Psoas muscle (tissue), 8 donors: ENCODE measurements at regions of chr3 and their contacts with region 1.

Region 1: GRCh38 chr3:122942937-122943827 is 84.4 kb downstream of the SEMA5B start:
- DNase-seq: peak; percentile 61 to 72
- ATAC-seq: peak; percentile 85 to 93 (median 90)
- H3K4me3 ChIP-seq: no peak overlapping the region
- H3K27ac ChIP-seq: no peak overlapping the region
- H3K4me1 ChIP-seq: no peaks in the 10 kb centered on the region
- H3K27me3 ChIP-seq: no peaks in the 10 kb centered on the region
- CTCF ChIP-seq: peak; percentile 85

Region 2: DNA sequence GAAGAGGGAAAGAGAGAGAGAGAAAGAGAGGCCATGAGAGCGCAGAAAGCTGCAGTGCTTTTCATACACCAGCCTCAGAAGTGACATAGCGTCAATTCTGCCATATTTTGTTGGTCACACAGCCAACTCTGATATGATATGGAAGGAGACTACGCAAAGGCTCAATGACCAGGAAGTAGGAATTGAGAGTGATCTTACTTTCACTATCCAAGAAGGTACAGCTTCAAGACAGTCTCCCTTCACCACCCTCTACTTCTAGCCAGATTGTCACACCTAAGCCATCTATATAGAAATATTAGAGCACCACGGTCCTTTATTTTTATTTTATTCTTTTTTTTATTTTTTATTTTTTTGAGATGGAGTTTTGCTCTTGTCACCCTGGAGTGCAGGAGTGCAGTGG is 344.6 kb before region 1 on chr3:
- intact Hi-C with region 1: no loop called
- DNase-seq: no peak
- ATAC-seq: no peak
- H3K4me3 ChIP-seq: no peak overlapping the region
- H3K27ac ChIP-seq: no peak overlapping the region
- H3K4me1 ChIP-seq: peaks cover 9% of the 10 kb centered on the region
- H3K27me3 ChIP-seq: no peaks in the 10 kb centered on the region
- CTCF ChIP-seq: no peak

Region 3: GRCh38 chr3:122810734-122811133 is 132.4 kb before region 1 on chr3:
- intact Hi-C with region 1: no loop called
- DNase-seq: no peak
- ATAC-seq: no peak
- H3K4me3 ChIP-seq: no peak overlapping the region
- H3K27ac ChIP-seq: no peak overlapping the region
- H3K4me1 ChIP-seq: no peaks in the 10 kb centered on the region
- H3K27me3 ChIP-seq: no peaks in the 10 kb centered on the region
- CTCF ChIP-seq: no peak

Region 4: DNA sequence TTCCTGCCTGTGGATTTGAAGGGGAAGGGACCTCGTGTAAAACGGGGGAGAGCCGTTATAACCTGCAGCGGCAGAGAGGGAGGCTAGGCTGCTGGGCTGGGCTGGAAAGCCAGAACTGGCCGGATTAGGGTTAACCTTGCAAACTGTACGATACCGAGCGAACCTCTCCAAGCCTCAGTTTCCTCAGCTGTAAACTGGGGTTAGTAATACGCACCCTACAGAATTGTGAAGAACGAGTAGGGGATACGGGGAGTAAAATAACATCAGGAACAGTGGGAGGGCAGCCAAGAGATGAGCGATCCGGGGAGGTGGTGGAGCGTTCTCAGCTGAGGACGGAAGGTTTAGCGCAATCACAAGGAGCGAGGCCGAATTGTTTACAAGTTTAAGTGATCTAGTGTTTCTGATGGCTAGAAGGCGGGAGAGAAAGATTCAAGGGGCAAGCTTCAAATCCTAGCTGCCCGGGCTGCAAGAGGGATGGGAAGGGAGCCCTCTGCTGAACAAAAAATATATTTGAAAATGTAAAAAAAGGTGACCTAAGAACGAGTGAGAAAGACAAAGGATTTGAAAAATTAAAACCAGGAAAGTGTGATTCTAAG is 85.1 kb after region 1 on chr3:
- intact Hi-C with region 1: loop called in 1 of 2 experiments (anchors 2 kb)
- DNase-seq: peak in 1 of 2 donors; percentile 17
- ATAC-seq: peak; percentile 28 to 67 (median 46)
- H3K4me3 ChIP-seq: peak overlapping the region; percentile 74
- H3K27ac ChIP-seq: no peak overlapping the region
- H3K4me1 ChIP-seq: peaks cover 10% of the 10 kb centered on the region
- H3K27me3 ChIP-seq: peaks cover 0 to 83% (median 18%) of the 10 kb centered on the region in 3 donors
- CTCF ChIP-seq: peak; percentile 49

Region 5: GRCh38 chr3:123258811-123259420 is 315.7 kb after region 1 on chr3:
- intact Hi-C with region 1: loop called (anchors 2 to 10 kb)
- DNase-seq: no peak
- ATAC-seq: peak in 2 of 4 donors; percentile 53 to 76
- H3K4me3 ChIP-seq: no peak overlapping the region
- H3K27ac ChIP-seq: no peak overlapping the region
- H3K4me1 ChIP-seq: no peaks in the 10 kb centered on the region
- H3K27me3 ChIP-seq: no peaks in the 10 kb centered on the region
- CTCF ChIP-seq: peak; percentile 62

Region 6: DNA sequence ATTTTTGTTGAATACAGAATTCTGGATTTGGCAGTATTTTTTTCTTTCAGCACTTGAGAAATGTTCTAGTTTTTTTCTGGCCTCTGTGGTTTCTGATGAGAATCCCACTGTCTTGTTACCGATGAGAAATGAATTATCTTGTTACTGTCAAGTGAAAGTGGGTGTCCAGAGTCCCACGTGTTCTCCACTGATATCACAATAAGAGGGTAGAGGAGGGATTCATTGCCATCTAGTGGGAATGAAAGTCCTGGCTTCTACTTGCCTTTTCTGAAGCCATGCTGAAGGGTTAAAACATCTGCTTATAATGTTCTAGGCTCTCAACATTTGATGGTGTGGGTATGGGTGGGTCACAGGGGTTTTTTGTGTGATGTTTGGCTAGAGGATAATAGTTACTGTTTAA is 324.6 kb after region 1 on chr3:
- intact Hi-C with region 1: loop called in 1 of 2 experiments (anchors 10 kb)
- DNase-seq: no peak
- ATAC-seq: no peak
- H3K4me3 ChIP-seq: no peak overlapping the region
- H3K27ac ChIP-seq: no peak overlapping the region
- H3K4me1 ChIP-seq: peaks cover 4% of the 10 kb centered on the region
- H3K27me3 ChIP-seq: no peaks in the 10 kb centered on the region
- CTCF ChIP-seq: no peak

Region 7: DNA sequence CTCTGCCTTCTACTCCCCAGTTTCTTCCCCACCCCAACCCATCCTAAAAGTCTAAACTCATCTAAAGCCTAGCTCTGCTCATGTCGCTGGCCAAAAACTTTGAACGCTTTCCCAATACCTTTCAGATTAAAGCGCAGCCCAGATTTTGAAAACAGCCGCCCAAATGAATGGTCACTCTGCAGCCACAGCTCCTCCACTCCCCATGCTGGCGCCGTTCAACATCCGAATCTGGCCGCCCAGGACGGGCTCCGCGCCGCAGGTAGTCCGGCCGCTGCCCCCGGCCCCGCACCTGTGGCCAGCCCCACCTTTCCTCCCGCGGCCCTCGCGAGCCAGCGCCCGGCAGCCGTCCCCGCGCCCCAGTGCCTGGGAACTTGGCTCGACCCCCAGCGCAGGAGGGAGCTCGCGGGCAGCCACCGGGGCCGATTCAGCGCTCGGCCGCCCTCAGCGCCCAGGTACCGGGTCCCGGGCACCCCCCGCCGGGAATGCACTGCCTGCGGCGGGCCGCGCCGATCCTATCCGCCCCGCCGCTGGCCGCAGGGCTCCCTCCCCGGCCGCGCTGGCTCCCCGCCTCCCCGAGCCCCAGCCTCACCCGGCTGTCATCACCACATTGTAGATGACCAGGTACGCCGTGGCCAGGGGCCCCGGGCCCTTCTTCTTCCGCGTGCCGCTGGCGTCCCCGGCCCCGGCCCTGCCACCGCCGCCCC is 641.3 kb after region 1 on chr3:
- intact Hi-C with region 1: no loop called
- DNase-seq: peak; percentile 60 to 78
- ATAC-seq: peak; percentile 58 to 65 (median 64)
- H3K4me3 ChIP-seq: peak overlapping the region; percentile 92
- H3K27ac ChIP-seq: peak overlapping the region; percentile 93
- H3K4me1 ChIP-seq: peaks cover 17% of the 10 kb centered on the region
- H3K27me3 ChIP-seq: no peaks in the 10 kb centered on the region
- CTCF ChIP-seq: peak; percentile 26